AG04449 (cell line): ENCODE measurements at regions of chr10 and their contacts with region 1.

Region 1: GRCh38 chr10:86585037-86585725 is 63.6 kb upstream of the WAPL start:
- DNase-seq: no peak
- H3K4me3 ChIP-seq: no peak overlapping the region
- CTCF ChIP-seq: peak; percentile 94

Region 2: DNA sequence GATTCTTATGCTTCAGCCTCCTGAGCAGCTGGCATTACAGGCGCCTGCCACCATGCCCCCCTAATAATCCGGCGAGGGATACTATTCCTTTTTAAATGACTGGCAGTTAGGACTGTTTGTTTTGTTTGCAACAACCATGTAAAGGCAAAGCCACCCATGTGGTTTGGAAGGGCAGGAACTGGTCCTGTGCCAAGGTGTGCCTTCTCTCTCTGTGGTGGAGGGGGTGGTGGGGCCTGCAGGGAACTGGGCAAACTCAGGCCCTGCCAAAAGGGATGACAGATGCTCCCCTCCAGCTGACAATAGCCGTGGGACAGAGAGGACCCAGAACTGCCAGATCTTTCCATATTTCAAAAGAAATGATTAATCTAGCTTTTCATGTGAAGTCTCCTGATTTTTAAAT is 40.1 kb before region 1 on chr10:
- CTCF ChIA-PET with region 1: interaction called, 12 read pairs
- POLR2A ChIA-PET with region 1: no interaction called
- DNase-seq: no peak
- H3K4me3 ChIP-seq: no peak overlapping the region
- CTCF ChIP-seq: no peak

Region 3: DNA sequence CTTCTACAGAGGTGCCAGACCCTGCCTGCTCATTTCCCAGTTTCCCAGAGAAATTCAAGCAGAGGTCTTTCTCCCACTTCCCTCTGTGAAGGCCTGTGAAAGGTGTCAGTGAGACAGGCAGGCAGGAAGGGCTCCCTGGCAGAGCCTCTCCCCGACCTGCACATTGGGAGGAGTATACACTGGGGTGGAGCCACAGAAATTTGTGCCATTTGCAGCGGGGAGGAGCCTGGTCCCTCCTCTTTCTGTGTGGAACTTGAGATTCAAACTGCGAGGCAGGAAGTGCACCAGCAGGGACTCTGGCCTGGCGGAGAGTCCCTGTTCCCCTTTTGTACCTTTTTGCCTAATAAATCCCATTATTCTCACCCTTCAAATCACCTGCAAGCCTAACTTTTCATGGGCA is 14.5 kb after region 1 on chr10:
- CTCF ChIA-PET with region 1: interaction called, 25 read pairs
- POLR2A ChIA-PET with region 1: no interaction called
- DNase-seq: no peak
- H3K4me3 ChIP-seq: no peak overlapping the region
- CTCF ChIP-seq: no peak

Region 4: GRCh38 chr10:86690657-86691084 is 105.5 kb after region 1 on chr10:
- CTCF ChIA-PET with region 1: no interaction called
- POLR2A ChIA-PET with region 1: no interaction called
- DNase-seq: no peak
- H3K4me3 ChIP-seq: no peak overlapping the region
- CTCF ChIP-seq: no peak